Activated B cell treated with CpG ODN at 0.5 μM for 24 hours (primary cell): ENCODE measurements at regions of chr17 and their contacts with region 1.

Region 1: DNA sequence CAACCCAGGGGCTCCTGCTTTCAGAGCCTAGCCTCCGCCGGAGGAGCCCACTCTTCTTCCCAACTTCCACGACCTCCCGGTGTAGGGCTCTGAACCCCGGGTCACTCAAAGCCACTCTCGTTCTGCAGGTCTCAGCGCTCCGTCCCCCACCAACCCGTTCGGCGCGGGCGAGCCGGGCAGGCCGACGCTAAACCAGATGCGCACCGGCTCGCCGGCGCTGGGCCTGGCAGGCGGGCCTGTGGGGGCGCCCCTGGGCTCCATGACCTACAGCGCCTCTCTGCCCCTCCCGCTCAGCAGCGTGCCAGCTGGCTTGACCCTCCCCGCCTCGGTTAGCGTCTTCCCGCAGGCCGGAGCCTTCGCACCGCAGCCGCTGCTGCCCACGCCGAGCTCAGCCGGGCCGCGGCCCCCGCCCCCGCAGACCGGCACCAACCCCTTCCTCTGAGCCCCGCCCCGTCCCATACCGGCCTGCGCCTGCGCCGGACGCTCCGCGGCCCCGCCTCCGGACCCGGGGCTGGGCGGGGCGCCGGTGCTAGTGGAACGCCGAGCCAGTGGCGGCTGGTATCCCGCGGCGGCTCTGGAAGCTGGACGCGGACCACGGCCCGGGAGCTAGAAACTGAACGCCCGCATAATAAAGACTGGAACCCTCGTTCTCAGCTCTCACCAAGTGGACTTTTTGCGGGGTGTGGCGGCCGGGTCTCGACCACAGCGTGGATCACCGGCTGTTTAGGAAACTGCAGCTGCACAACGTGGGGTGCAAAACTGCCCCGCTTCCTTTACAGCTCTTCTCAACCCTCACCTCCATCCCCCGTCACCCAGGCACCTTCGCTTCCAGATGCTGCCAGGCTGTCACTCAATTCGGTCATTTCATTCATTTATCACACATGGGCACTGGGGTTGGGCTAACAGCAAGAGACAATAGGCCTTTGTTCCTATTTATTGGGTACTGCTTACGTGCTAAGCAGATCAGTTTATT is 5.0 kb upstream of the SPATA20 start:
- DNase-seq: peak; percentile 92
- ATAC-seq: peak; percentile 86
- H3K4me3 Mint-ChIP-seq: peak overlapping the region; percentile 85
- H3K27ac Mint-ChIP-seq: peak overlapping the region; percentile 76
- H3K4me1 Mint-ChIP-seq: peaks cover 17% of the 10 kb centered on the region
- H3K27me3 Mint-ChIP-seq: peaks cover 7% of the 10 kb centered on the region
- CTCF ChIP-seq: no peak

Region 2: DNA sequence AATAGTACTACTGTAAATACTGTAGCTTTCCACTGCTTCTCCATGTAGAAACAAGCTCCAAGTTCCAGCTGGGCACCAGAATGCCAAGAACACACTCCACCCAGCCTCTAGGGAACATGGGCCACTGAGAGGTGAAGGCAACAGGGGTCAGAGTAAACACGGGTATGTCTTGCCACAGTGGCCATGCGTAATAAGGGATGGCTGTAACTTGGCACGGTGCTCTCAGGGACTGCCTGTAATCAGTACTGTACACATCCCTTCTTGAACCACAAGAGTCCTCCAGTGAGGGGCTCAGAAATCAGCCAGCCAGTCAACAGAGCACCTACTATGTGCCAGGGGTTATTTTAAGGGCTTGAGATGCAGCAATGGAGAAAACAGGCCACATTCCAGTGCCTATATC is 155.5 kb before region 1 on chr17:
- CTCF ChIA-PET with region 1: no interaction called
- POLR2A ChIA-PET with region 1: no interaction called
- intact Hi-C with region 1: no loop called
- DNase-seq: no peak
- ATAC-seq: no peak
- H3K4me3 Mint-ChIP-seq: no peak overlapping the region
- H3K27ac Mint-ChIP-seq: no peak overlapping the region
- H3K4me1 Mint-ChIP-seq: peaks cover 9% of the 10 kb centered on the region
- H3K27me3 Mint-ChIP-seq: no peaks in the 10 kb centered on the region
- CTCF ChIP-seq: no peak

Region 3: DNA sequence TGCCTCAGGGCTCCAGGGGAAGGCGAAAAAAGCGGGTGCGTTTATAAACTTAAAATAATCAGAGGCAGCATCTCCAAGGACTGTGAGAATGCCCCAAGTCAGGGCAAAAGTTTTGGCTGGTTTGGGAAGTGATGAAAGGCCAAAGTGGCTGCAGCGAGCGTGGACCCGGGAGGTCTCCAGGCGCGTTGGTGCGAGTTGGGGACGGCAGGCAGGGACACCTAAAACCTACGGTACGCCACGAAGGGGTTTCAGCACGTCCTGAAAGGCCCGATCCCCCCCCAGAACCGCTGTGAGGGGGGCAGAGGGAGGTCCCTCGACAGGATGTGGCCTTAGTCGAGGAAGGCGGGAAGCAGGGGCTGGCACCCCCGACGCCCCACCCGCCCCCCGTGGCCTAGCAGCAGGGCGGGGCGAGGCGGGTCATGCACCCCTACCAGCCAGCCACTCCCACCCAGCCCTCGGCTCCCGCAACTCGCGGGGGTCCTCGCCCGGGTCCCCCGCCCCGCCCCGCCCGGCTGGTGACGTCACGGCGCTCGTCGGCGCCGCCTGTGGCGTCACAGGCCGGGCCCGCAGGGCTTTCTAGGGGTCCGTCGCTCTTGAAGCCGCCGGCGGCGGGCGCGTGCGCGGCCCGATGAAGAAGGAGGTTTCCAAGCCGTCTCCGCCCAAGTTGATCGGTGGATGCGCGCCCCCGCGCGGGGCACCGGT is 34.0 kb before region 1 on chr17 and contains the start of gene MYCBPAP:
- CTCF ChIA-PET with region 1: no interaction called
- POLR2A ChIA-PET with region 1: no interaction called
- intact Hi-C with region 1: loop called (anchors 1 kb)
- DNase-seq: peak; percentile 77
- ATAC-seq: peak; percentile 82
- H3K4me3 Mint-ChIP-seq: peak within 1 kb of the TSS; percentile 89
- H3K27ac Mint-ChIP-seq: peak within 1 kb of the TSS; percentile 86
- H3K4me1 Mint-ChIP-seq: peaks cover 31% of the 10 kb centered on the region
- H3K27me3 Mint-ChIP-seq: no peaks in the 10 kb centered on the region
- CTCF ChIP-seq: no peak
- total RNA-seq, gene MYCBPAP: 2.1 and 2.3 TPM in 2 replicates